ENCODE measurements at regions of chr1 and their contacts with region 1.

Region 1: DNA sequence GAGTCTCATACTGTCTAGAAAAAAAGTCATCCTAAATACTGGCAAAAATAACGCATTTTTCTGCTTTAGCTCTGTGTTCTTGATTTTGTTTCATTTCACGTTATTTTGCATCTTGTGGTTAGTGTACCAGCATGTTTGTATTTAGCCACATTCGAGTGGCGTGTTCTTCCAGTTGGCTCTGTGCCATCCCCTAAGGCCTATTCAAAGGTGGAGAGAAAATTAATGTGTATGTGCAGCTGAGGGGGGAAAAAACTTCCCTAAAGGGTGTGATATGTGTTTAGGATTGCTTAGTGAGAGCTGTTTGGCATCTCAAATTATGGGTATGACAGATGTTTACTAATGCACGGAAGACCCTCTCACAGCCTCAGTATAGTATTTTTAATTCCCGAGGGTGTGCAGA is 12.1 kb downstream of the DNAJC16 start:
- DNase-seq: no peak
- ATAC-seq: no peak
- H3K4me3 ChIP-seq: no peak overlapping the region
- H3K27ac ChIP-seq: no peak overlapping the region
- H3K4me1 ChIP-seq: no peaks in the 10 kb centered on the region
- H3K27me3 ChIP-seq: no peaks in the 10 kb centered on the region
- CTCF ChIP-seq: no peak

Region 2: DNA sequence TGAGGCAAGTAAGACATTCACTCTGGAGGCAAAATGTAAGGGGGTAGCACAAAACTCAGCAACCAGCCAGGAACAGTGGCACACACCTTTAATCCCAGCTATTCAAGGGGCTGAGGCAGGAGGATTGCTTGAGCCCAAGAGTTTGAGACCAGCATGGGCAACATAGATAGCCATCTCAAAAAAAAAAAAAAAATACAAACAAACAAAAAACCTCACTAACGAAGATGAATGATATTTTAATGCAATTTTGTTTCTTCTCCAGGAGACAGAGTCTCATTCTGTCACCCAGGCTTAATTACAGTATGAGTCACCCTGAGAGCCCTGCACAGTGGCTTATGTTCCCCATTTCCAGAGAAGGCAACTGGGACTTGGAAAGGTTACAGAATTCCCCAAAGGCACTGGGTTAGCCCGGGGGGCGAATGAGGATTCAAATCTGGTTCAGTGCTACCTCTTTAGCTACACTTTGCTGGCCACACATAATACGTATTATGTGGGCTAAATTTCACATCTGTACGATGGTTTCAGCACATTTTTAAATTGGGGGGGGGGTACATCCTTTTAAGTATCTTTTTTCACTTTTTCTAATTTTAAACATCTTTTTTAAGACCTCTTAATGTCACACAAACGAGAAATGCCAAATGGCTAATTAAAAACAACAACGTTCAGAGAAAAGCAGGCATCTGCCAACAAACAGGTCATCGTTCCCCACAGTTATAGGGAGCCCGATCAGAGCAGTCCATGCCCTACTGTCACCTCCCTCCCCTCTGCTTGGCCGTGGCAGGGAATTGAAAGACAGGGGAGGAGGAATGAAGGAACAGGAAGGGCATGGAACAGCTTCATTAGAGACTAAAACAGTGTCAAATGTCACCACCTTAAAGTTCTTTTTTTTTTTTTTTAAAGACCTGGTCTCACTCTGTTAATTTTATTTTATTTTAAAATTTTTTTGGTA is 78.7 kb before region 1 on chr1:
- CTCF ChIA-PET with region 1: no interaction called
- POLR2A ChIA-PET with region 1: no interaction called
- in situ Hi-C with region 1: no loop called
- intact Hi-C with region 1: no loop called
- DNase-seq: no peak
- ATAC-seq: no peak
- H3K4me3 ChIP-seq: no peak overlapping the region
- H3K27ac ChIP-seq: no peak overlapping the region
- H3K4me1 ChIP-seq: no peaks in the 10 kb centered on the region
- H3K27me3 ChIP-seq: no peaks in the 10 kb centered on the region
- CTCF ChIP-seq: no peak

Region 3: DNA sequence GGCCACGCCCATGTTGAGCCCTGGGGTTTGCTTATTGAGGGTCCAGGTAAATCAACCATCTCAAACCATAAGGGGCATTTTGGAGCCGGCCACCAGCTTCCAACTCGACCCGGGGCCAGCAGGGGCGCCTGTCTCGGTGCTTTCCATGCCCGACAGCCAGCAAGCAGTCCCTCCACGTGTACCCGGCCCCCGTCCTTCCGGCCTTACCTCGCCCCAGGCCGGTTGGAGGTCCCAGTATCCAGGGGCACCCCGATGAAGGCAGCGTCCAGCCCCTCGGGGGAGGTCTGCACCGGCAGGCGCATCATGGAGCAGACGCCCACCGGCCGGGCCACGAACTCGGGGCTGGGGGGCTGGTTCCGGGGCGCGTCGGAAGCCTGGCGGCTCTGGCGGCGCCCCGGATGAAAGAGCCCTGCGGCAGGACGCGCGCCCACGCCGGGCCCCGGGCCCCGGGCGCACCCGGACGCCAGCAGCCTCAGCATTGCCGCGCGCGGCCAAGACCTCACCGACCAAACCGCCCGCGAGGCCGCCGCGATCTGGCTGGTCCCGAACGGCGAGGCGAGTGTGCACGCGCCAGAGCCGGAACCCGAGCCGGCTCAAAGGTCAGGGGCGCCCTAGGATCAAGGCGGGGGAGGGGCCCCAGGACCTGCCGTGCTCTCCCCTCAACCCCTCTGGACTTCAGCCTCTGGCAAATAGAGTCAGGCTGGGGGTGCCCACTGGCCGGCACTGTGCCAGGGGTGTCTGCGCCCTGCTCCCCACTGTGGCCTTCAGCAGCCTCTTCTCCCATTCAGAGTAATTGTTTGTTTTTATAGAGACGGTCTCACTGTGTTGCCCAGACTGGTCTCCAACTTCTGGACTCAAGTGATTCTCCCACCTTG is 46.0 kb after region 1 on chr1 and contains the start of gene AGMAT:
- CTCF ChIA-PET with region 1: no interaction called
- POLR2A ChIA-PET with region 1: no interaction called
- in situ Hi-C with region 1: no loop called
- intact Hi-C with region 1: no loop called
- DNase-seq: no peak
- ATAC-seq: peak; percentile 92
- H3K4me3 ChIP-seq: peak within 1 kb of the TSS; percentile 49 to 61
- H3K27ac ChIP-seq: peak within 1 kb of the TSS; percentile 62
- H3K4me1 ChIP-seq: no peaks in the 10 kb centered on the region
- H3K27me3 ChIP-seq: no peaks in the 10 kb centered on the region
- CTCF ChIP-seq: no peak; the same call in 1 of the 2 replicates
- total RNA-seq, gene AGMAT: 3.1 TPM

Region 4: DNA sequence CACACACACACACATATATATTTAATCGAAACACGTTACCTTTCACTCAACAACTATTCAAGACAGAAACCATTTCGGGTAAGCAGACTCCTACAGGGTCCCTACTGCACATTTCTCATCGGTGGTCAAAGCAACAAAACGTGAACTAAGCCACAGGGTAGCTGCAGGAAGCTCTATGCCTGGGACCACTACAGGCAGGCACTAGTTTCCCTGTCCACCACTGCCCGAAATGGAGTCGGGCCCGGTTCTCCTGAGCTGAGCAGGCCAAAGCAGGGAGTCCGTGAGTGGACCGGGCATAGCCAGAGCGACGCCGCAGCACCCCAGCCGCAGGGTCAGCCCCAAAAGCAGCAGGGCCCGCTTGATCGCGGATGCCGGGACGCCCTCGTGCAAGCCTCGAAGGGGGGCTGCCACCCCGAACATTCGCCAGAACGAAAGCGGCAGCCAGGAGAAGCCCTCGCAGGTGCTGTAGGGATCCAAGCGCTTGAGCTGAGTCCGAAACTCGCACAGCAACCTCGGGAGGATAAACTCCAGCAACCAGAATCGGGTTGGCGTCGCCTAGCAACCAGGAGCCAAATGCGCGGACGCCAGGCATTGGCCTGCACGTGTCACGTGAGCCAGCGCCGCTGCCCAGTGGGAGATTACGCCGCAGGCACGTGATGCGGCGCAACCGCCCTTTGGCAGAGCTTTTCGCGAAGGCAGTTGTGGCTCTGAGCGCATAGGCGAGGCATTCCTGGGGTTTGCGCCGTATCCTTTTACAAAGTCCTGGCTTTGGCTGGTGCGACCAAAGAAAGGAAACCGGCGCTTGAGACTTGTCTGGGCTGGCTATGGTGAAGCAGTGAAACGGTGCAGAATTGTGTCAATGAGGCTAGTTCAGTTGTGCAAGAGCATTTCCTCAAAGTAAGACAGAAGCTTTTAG is 64.5 kb after region 1 on chr1:
- CTCF ChIA-PET with region 1: no interaction called
- POLR2A ChIA-PET with region 1: interaction called, 14 read pairs
- in situ Hi-C with region 1: no loop called
- intact Hi-C with region 1: no loop called
- DNase-seq: peak; percentile 86
- ATAC-seq: peak; percentile 97
- H3K4me3 ChIP-seq: peak overlapping the region; percentile 70 to 90
- H3K27ac ChIP-seq: peak overlapping the region; percentile 90
- H3K4me1 ChIP-seq: peaks cover 10% of the 10 kb centered on the region; the same call in 1 of the 2 replicates
- H3K27me3 ChIP-seq: no peaks in the 10 kb centered on the region
- CTCF ChIP-seq: no peak

Region 5: DNA sequence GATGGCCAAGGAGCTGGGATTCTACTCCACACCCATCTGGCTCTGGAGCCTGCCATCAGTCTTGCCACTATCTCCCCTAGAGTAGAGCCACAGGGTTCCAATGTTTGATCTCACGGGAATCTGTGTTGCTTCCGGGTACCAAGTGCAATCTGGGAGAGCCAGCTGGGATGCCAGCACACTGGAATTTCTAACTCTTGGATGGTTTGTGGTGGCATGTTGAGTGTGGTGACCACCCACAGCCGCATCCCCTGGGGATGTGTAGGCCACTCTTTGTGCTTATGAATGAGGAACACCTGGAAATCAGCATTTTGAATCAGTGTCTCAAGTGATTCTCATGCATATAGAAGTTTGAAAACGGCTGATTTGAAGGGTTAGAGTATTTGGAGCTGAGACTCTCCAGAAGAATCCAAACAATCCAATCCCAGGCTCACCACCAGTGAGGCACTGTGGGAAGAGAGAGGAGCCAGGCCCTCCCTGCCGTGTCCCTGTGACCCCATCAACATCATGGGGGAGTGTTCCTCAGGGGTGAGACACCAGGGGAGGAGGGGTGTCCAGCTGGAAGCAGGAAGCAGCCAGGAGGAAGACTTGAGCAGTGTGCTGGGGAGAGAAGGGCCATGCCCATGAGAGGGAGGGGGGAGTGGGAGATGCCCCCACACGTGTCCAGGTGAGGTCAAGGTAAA is 233.2 kb after region 1 on chr1:
- CTCF ChIA-PET with region 1: interaction called, 11 read pairs
- POLR2A ChIA-PET with region 1: no interaction called
- in situ Hi-C with region 1: no loop called
- intact Hi-C with region 1: no loop called
- DNase-seq: no peak
- ATAC-seq: peak; percentile 33
- H3K4me3 ChIP-seq: no peak overlapping the region
- H3K27ac ChIP-seq: no peak overlapping the region
- H3K4me1 ChIP-seq: no peaks in the 10 kb centered on the region
- H3K27me3 ChIP-seq: no peaks in the 10 kb centered on the region
- CTCF ChIP-seq: no peak